T-cell (primary cell): ENCODE measurements at regions of chr13 and their contacts with region 1.

Region 1: GRCh38 chr13:22211876-22212275 is 541.0 kb downstream of the FGF9 start:
- DNase-seq: no peak
- ATAC-seq: no peak
- H3K4me3 ChIP-seq: no peak overlapping the region
- H3K4me3 Mint-ChIP-seq: no peak overlapping the region
- H3K27ac ChIP-seq: no peak overlapping the region
- H3K27ac Mint-ChIP-seq: no peak overlapping the region
- H3K4me1 ChIP-seq: peaks cover 0 to 2% of the 10 kb centered on the region in 2 experiments
- H3K4me1 Mint-ChIP-seq: peaks cover 25 to 35% (median 30%) of the 10 kb centered on the region in 3 donors
- H3K27me3 ChIP-seq: no peaks in the 10 kb centered on the region
- H3K27me3 Mint-ChIP-seq: no peaks in the 10 kb centered on the region

Region 2: GRCh38 chr13:21749410-21749809 is 462.5 kb before region 1 on chr13:
- CTCF ChIA-PET with region 1: no interaction called
- POLR2A ChIA-PET with region 1: no interaction called
- DNase-seq: no peak
- ATAC-seq: no peak
- H3K4me3 ChIP-seq: no peak overlapping the region
- H3K4me3 Mint-ChIP-seq: no peak overlapping the region
- H3K27ac ChIP-seq: no peak overlapping the region
- H3K27ac Mint-ChIP-seq: no peak overlapping the region
- H3K4me1 ChIP-seq: no peaks in the 10 kb centered on the region
- H3K4me1 Mint-ChIP-seq: no peaks in the 10 kb centered on the region
- H3K27me3 ChIP-seq: peaks cover 0 to 2% of the 10 kb centered on the region in 2 experiments
- H3K27me3 Mint-ChIP-seq: peaks cover 6 to 10% of the 10 kb centered on the region in 2 donors

Region 3: GRCh38 chr13:22198001-22198400 is 13.9 kb before region 1 on chr13:
- CTCF ChIA-PET with region 1: interaction called in 1 of 2 experiments, 10 read pairs
- POLR2A ChIA-PET with region 1: interaction called in 1 of 2 experiments, 3 read pairs
- DNase-seq: no peak
- ATAC-seq: no peak
- H3K4me3 ChIP-seq: no peak overlapping the region
- H3K4me3 Mint-ChIP-seq: no peak overlapping the region
- H3K27ac ChIP-seq: no peak overlapping the region
- H3K27ac Mint-ChIP-seq: no peak overlapping the region
- H3K4me1 ChIP-seq: no peaks in the 10 kb centered on the region
- H3K4me1 Mint-ChIP-seq: no peaks in the 10 kb centered on the region
- H3K27me3 ChIP-seq: no peaks in the 10 kb centered on the region
- H3K27me3 Mint-ChIP-seq: peaks cover 0 to 2% of the 10 kb centered on the region in 2 donors